Gastrocnemius medialis (tissue), 4 donors: ENCODE measurements at regions of chr22 and their contacts with region 1.

Region 1: GRCh38 chr22:29336751-29337490 is 21.4 kb upstream of the RASL10A start:
- DNase-seq: peak; percentile 84 to 88
- ATAC-seq: peak; percentile 92 to 96
- H3K4me3 ChIP-seq: peak overlapping the region in 2 of 4 donors; percentile 16 to 44
- H3K27ac ChIP-seq: peak overlapping the region; percentile 84 to 96 (median 89)
- H3K4me1 ChIP-seq: peaks cover 27 to 36% of the 10 kb centered on the region in 2 donors
- H3K27me3 ChIP-seq: no peaks in the 10 kb centered on the region
- CTCF ChIP-seq: no peak
- POLR2A ChIP-seq: no peak

Region 2: DNA sequence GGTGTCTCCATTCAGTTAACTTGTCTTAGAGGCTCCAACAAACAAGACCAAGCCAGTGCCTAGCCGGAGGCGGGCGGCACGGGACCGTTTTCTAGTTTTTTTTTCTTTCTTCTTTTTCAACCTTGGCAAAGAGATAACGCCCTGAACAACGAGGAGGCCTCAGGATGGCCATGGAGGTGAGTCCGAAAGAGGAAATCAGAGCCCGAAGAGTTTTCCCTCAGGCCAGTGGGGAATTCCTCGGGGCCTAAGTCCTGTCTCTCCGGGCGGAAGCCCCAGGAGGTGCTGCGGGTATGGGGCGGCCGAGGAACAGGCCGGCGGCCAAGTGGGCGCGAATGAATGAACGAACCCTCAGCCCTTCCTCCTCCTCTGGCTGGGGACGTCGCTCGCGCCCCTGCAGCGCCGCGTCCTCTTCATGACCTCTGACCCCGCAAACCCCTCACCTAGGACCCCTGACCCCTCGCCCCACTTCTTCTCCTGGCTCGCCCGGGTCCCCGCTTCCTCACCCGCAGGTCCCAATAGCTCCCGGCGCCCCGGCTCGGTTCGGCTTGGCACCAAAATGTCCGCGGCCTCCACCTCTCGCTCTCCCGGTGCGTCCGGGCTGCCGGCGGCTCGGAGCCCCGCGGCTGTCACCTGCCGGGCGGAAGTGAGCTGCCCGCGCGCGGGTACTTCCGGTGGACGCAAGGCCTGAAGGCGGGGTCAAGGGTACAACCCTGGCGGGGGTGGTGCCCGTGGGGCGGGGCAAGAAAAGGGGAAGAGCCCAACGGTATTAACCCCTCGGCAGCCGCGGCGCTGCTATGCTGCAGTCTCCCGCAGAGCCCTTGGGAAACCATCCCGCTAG is 51.2 kb after region 1 on chr22 and contains the start of gene AP1B1:
- in situ Hi-C with region 1: no loop called
- intact Hi-C with region 1: loop called (anchors 1 kb)
- DNase-seq: peak; percentile 90 to 95
- ATAC-seq: peak; percentile 92 to 95
- H3K4me3 ChIP-seq: peak within 1 kb of the TSS; percentile 69 to 96 (median 82)
- H3K27ac ChIP-seq: peak within 1 kb of the TSS; percentile 83 to 97 (median 92)
- H3K4me1 ChIP-seq: peaks cover 27 to 28% of the 10 kb centered on the region in 2 donors
- H3K27me3 ChIP-seq: no peaks in the 10 kb centered on the region
- CTCF ChIP-seq: peak in 1 of 5 experiments; percentile 10
- POLR2A ChIP-seq: peak; percentile 78 to 86
- total RNA-seq, gene AP1B1: 26.5 to 44.6 (median 37.3) TPM